Heart left ventricle (tissue), 16 donors: ENCODE measurements at regions of chr17 and their contacts with region 1.

Region 1: DNA sequence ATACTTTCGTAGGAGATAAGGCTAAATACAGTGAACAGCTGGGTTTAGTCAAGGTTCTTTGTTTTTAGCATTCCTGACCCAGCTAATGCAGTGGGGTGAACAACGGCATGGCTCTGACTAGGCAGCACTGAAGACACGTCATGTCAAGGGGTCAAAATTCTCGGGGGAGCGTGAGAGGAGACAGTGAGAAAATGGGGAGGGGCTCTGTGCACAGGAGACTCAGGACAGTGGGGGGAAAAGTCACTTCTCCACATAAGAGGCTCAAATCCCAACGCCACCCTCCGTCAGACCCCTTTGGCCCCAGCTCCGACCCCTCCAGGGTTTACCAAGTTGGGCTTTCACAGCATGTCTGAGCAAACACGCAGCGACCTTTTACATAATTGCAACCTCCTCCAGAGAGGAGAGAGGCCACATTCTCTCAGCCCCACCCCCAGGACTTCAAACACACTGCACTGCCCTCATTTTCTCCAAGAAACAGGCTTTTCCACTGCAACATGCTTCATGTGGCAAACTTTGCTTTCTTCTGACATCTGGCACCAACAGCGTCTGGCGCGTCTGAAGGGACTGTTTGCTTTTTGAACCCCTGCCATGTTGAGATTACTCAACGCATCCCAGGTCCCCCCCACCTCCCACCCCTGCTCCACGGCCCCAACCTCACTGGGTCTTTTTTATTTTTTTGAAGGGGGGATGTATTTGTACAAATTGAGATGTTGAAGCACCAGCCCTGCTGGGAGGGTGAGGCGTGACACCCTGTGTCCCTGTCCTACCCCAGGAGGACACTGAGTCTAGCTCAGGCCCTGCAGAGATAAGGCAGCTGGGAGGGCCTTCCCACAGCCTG is 30.0 kb downstream of the AXIN2 start:
- DNase-seq: peak; percentile 43 to 68 (median 51)
- ATAC-seq: peak; percentile 69 to 82 (median 72)
- H3K4me3 ChIP-seq: peak overlapping the region in 1 of 12 donors; percentile 3
- H3K27ac ChIP-seq: peak overlapping the region; percentile 58 to 81 (median 72)
- H3K4me1 ChIP-seq: peaks cover 4 to 32% (median 25%) of the 10 kb centered on the region in 12 donors
- H3K27me3 ChIP-seq: no peaks in the 10 kb centered on the region
- CTCF ChIP-seq: peak in 5 of 12 donors; percentile 11 to 30 (median 18)
- POLR2A ChIP-seq: no peak

Region 2: DNA sequence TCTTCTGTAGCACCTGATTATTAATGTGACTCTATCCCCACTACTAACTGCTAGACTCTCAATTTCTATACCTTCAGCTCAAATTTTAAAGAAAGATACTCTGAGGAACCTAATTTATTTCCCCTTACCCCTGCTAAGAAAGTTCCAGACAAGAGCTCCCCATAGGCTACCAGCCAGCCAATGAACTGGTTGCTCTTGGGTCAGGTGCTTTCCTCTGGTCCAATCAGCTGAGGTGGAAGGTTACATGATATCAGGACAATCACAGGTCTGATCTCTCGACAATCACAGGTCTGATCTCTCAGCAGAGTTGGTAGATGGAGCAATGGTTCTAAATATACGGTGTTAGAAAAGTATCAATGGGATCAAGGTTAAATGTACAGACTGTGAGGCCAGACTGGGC is 56.8 kb before region 1 on chr17:
- intact Hi-C with region 1: loop called in 1 of 10 experiments (anchors 5 kb)
- DNase-seq: no peak
- ATAC-seq: no peak
- H3K4me3 ChIP-seq: no peak overlapping the region
- H3K27ac ChIP-seq: no peak overlapping the region
- H3K4me1 ChIP-seq: peaks cover 0 to 17% (median 7%) of the 10 kb centered on the region in 12 donors
- H3K27me3 ChIP-seq: no peaks in the 10 kb centered on the region
- CTCF ChIP-seq: no peak
- POLR2A ChIP-seq: no peak

Region 3: DNA sequence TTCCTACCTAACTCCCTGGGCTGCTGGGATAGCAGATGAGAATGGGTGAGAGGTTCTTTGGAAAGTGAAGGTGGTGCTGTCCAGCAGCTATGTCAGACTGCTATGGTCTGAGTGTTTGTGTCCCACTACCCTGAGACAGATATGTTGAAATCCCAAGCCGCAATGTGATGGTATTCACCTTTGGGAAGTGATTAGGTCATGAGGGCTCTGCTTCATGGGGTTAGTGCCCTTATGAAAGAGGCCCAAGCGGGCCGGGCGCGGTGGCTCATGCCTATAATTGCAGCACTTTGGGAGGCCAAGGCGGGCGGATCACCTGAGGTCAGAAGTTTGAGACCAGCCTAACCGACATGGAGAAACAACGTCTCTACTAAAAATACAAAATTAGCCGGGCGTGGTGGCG is 51.2 kb before region 1 on chr17:
- intact Hi-C with region 1: loop called in 2 of 10 experiments (anchors 5 kb)
- DNase-seq: no peak
- ATAC-seq: no peak
- H3K4me3 ChIP-seq: no peak overlapping the region
- H3K27ac ChIP-seq: no peak overlapping the region
- H3K4me1 ChIP-seq: no peaks in the 10 kb centered on the region
- H3K27me3 ChIP-seq: no peaks in the 10 kb centered on the region
- CTCF ChIP-seq: no peak
- POLR2A ChIP-seq: no peak

Region 4: GRCh38 chr17:65495122-65496055 is 36.1 kb before region 1 on chr17:
- intact Hi-C with region 1: no loop called
- DNase-seq: no peak
- ATAC-seq: no peak
- H3K4me3 ChIP-seq: no peak overlapping the region
- H3K27ac ChIP-seq: no peak overlapping the region
- H3K4me1 ChIP-seq: no peaks in the 10 kb centered on the region
- H3K27me3 ChIP-seq: no peaks in the 10 kb centered on the region
- CTCF ChIP-seq: no peak
- POLR2A ChIP-seq: no peak

Region 5: DNA sequence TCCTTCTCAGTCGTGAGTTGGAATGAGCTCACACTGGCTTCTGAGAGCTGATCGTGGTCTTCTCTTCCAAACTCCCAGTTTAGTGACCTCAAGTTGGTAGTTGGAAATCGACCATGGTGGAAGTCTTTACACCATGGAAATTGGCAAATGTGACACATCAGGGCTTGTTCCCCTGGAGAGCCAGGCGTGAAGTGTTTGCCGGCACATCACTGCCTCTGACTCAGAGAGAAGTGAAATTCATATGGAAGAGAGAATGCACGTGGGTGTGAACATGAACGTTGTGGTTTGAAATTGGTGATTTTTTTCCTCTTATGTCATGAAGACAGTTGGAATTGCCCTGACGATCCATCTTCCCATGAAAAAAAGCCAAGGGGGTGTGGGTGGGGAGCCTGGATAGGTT is 17.4 kb before region 1 on chr17:
- intact Hi-C with region 1: no loop called
- DNase-seq: no peak
- ATAC-seq: peak in 1 of 4 donors; percentile 53
- H3K4me3 ChIP-seq: no peak overlapping the region
- H3K27ac ChIP-seq: no peak overlapping the region
- H3K4me1 ChIP-seq: peaks cover 0 to 5% (median 0%) of the 10 kb centered on the region in 12 donors
- H3K27me3 ChIP-seq: no peaks in the 10 kb centered on the region
- CTCF ChIP-seq: no peak
- POLR2A ChIP-seq: no peak

Region 6: GRCh38 chr17:66441101-66441661 is 909.7 kb after region 1 on chr17:
- intact Hi-C with region 1: no loop called
- DNase-seq: no peak
- ATAC-seq: no peak
- H3K4me3 ChIP-seq: peak overlapping the region in 1 of 12 donors; percentile 28
- H3K27ac ChIP-seq: peak overlapping the region in 2 of 12 donors; percentile 4 to 16
- H3K4me1 ChIP-seq: peaks cover 0 to 24% (median 0%) of the 10 kb centered on the region in 12 donors
- H3K27me3 ChIP-seq: no peaks in the 10 kb centered on the region
- CTCF ChIP-seq: no peak
- POLR2A ChIP-seq: no peak